PC-9 (cell line): ENCODE measurements at regions of chr4 and their contacts with region 1.

Region 1: GRCh38 chr4:73922766-73923630 is 53.8 kb downstream of the CXCL1 start:
- DNase-seq: no peak
- H3K4me3 ChIP-seq: no peak overlapping the region
- H3K27ac ChIP-seq: no peak overlapping the region
- H3K4me1 ChIP-seq: 0 out of 2 replicates have a peak, but pooled peaks cover under 1% of the 10 kb centered on the region
- H3K27me3 ChIP-seq: no peaks in the 10 kb centered on the region
- CTCF ChIP-seq: peak; percentile 61

Region 2: GRCh38 chr4:73593631-73594241 is 329.3 kb before region 1 on chr4:
- CTCF ChIA-PET with region 1: no interaction called
- POLR2A ChIA-PET with region 1: no interaction called
- intact Hi-C with region 1: loop called (anchors 10 kb)
- DNase-seq: no peak
- H3K4me3 ChIP-seq: no peak overlapping the region
- H3K27ac ChIP-seq: no peak overlapping the region
- H3K4me1 ChIP-seq: peaks cover 3% of the 10 kb centered on the region; the same call in 1 of the 2 replicates
- H3K27me3 ChIP-seq: no peaks in the 10 kb centered on the region
- CTCF ChIP-seq: peak; percentile 68

Region 3: DNA sequence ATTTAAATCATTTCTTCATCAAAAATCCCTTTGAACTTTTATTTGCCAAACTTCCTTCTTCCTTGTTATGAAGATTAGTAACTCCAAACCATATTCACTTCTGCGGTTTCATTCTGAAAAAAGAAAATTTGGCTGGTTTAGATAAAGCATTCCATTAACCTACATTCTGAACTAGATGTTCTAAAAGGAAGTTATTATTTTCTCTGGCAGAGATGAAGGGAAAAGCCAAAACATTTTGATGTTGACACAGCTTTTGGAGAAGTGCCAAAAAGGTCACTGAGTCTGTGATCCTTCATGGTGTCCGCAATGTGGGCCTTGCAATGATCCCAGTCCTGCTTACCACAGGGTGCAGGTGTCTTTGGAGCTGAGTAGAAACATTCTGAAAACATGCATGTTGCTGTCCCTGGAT is 146.7 kb before region 1 on chr4:
- CTCF ChIA-PET with region 1: no interaction called
- POLR2A ChIA-PET with region 1: no interaction called
- intact Hi-C with region 1: no loop called
- DNase-seq: peak; percentile 4 to 67
- H3K4me3 ChIP-seq: no peak overlapping the region
- H3K27ac ChIP-seq: no peak overlapping the region
- H3K4me1 ChIP-seq: no peaks in the 10 kb centered on the region
- H3K27me3 ChIP-seq: no peaks in the 10 kb centered on the region
- CTCF ChIP-seq: no peak

Region 4: GRCh38 chr4:73859614-73860088 is 63.3 kb before region 1 on chr4:
- CTCF ChIA-PET with region 1: no interaction called
- POLR2A ChIA-PET with region 1: no interaction called
- intact Hi-C with region 1: no loop called
- DNase-seq: no peak
- H3K4me3 ChIP-seq: no peak overlapping the region
- H3K27ac ChIP-seq: no peak overlapping the region
- H3K4me1 ChIP-seq: no peaks in the 10 kb centered on the region
- H3K27me3 ChIP-seq: no peaks in the 10 kb centered on the region
- CTCF ChIP-seq: no peak

Region 5: DNA sequence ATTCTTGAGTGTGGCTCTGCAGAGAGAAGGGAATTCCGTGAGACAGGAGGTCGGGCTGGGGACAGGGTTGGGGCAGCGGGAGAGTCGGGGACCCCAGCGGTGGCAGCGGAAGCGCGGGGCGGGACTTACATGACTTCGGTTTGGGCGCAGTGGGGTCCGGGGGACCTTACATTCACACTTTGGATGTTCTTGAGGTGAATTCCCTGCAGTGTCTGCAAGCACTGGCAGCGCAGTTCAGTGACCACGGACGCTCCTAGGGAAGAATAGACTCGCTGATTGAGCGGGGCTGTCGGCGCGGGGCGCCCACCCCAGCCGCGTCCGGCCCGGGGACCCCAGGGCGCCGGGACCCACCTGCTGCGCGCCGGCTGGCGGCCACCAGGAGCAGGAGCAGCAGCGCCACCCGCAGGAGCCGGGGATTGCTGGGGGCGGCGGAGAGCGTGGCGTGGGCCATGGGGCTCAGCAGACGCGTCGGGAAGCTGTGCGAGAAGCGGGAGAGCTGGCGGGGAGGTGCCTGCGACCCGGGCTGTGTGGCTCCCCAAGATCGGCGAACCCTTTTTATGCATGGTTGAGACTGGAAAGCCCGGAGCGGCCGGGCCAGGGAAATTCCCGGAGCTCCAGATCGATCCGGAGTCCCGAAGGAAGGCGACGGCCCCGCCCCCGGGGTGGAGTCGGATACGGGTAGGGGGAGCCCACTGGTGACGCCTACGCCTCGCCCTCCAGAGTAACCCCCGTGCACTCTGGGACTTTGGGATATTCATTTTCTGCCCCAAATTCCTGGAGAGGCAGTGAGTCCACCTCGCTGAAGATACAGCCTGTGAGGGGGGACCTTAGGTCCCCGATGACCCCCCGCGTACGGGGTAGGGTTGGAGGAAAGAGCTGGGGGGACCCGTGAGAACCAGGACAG is 115.4 kb after region 1 on chr4 and contains the start of gene CXCL3:
- CTCF ChIA-PET with region 1: no interaction called
- POLR2A ChIA-PET with region 1: no interaction called
- intact Hi-C with region 1: loop called (anchors 5 kb)
- DNase-seq: peak in 1 of 2 experiments; percentile 44
- H3K4me3 ChIP-seq: peak within 1 kb of the TSS; percentile 79
- H3K27ac ChIP-seq: no peak within 1 kb of the TSS
- H3K4me1 ChIP-seq: peaks cover 6% of the 10 kb centered on the region; the same call in 1 of the 2 replicates
- H3K27me3 ChIP-seq: no peaks in the 10 kb centered on the region
- CTCF ChIP-seq: peak; percentile 50; the same call in 1 of the 2 replicates
- total RNA-seq, gene CXCL3: not detected in 2 replicates